Activated naive CD4-positive, alpha-beta T cell treated with anti-CD3 and anti-CD28 coated beads, Interleukin-2, amount 10 ng/mL, durations not matched to agents 7 days and 5 days (primary cell): ENCODE measurements at regions of chr4 and their contacts with region 1.

Region 1: GRCh38 chr4:57163530-57164459 is 53.6 kb upstream of the IGFBP7 start:
- DNase-seq: peak; percentile 75
- H3K4me3 Mint-ChIP-seq: peak overlapping the region; percentile 74
- H3K27ac Mint-ChIP-seq: no peak overlapping the region
- H3K4me1 Mint-ChIP-seq: peaks cover 12% of the 10 kb centered on the region
- H3K27me3 Mint-ChIP-seq: peaks cover 23% of the 10 kb centered on the region

Region 2: DNA sequence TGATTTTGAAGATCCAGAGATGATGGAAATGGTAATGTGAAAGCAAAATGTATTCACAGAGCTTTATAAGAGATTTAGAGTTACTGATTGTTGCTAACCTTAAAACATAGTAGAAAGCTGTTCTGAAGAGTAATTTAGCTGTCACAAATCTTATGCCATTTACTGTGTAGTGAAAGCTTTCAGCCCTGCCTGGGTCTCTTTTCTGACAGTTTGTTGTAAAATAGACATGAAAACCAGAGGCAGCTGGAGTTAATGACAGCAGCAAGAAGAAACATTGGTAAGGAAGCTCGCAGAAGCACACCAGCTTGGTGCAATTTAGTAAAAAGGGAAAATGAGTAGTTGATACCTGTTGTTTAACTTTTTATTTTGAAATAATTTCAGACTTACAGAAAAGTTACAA is 164.0 kb before region 1 on chr4:
- CTCF ChIA-PET with region 1: no interaction called
- DNase-seq: no peak
- H3K4me3 Mint-ChIP-seq: no peak overlapping the region
- H3K27ac Mint-ChIP-seq: no peak overlapping the region
- H3K4me1 Mint-ChIP-seq: no peaks in the 10 kb centered on the region
- H3K27me3 Mint-ChIP-seq: no peaks in the 10 kb centered on the region

Region 3: GRCh38 chr4:57199267-57199666 is 35.5 kb after region 1 on chr4:
- CTCF ChIA-PET with region 1: interaction called, 13 read pairs
- DNase-seq: no peak
- H3K4me3 Mint-ChIP-seq: no peak overlapping the region
- H3K27ac Mint-ChIP-seq: no peak overlapping the region
- H3K4me1 Mint-ChIP-seq: no peaks in the 10 kb centered on the region
- H3K27me3 Mint-ChIP-seq: no peaks in the 10 kb centered on the region